Dorsolateral prefrontal cortex (tissue), 120 donors: ENCODE measurements at regions of chr4 and their contacts with region 1.

Region 1: GRCh38 chr4:56799824-56800756 is 21.4 kb downstream of the SPINK2 start:
- DNase-seq: peak; percentile 40 to 91 (median 87)
- H3K4me3 ChIP-seq: peak overlapping the region; percentile 49 to 83 (median 70)
- H3K27ac ChIP-seq: peak overlapping the region in 51 of 59 donors; percentile 3 to 89 (median 74)
- H3K27me3 ChIP-seq: no peaks in the 10 kb centered on the region
- CTCF ChIP-seq: peak; percentile 62 to 96 (median 87)

Region 2: GRCh38 chr4:56681158-56681852 is 118.8 kb before region 1 on chr4 and contains the start of gene HOPX:
- intact Hi-C with region 1: loop called in 1 of 2 experiments (anchors 10 kb)
- DNase-seq: peak in 2 of 10 donors; percentile 27 to 37
- H3K4me3 ChIP-seq: peak within 1 kb of the TSS; percentile 17 to 65 (median 46)
- H3K27ac ChIP-seq: peak within 1 kb of the TSS in 48 of 59 donors; percentile 15 to 85 (median 57)
- H3K27me3 ChIP-seq: peaks cover 0 to 3% (median 0%) of the 10 kb centered on the region in 45 donors
- CTCF ChIP-seq: no peak
- total RNA-seq, gene HOPX: 30.4 to 251 (median 125) TPM